Sigmoid colon (tissue), 7 donors: ENCODE measurements at regions of chr9 and their contacts with region 1.

Region 1: GRCh38 chr9:128098297-128099230 is 29.0 kb downstream of the PTGES2 start:
- DNase-seq: peak; percentile 99
- H3K4me3 ChIP-seq: peak overlapping the region; percentile 28 to 55 (median 47)
- H3K27ac ChIP-seq: peak overlapping the region; percentile 91 to 98 (median 92)
- H3K4me1 ChIP-seq: peaks cover 0 to 66% (median 58%) of the 10 kb centered on the region in 4 donors
- H3K27me3 ChIP-seq: no peaks in the 10 kb centered on the region
- CTCF ChIP-seq: no peak
- EP300 ChIP-seq: peak in 3 of 4 donors; percentile 83 to 91 (median 89)
- POLR2A ChIP-seq: peak; percentile 94 to 96

Region 2: DNA sequence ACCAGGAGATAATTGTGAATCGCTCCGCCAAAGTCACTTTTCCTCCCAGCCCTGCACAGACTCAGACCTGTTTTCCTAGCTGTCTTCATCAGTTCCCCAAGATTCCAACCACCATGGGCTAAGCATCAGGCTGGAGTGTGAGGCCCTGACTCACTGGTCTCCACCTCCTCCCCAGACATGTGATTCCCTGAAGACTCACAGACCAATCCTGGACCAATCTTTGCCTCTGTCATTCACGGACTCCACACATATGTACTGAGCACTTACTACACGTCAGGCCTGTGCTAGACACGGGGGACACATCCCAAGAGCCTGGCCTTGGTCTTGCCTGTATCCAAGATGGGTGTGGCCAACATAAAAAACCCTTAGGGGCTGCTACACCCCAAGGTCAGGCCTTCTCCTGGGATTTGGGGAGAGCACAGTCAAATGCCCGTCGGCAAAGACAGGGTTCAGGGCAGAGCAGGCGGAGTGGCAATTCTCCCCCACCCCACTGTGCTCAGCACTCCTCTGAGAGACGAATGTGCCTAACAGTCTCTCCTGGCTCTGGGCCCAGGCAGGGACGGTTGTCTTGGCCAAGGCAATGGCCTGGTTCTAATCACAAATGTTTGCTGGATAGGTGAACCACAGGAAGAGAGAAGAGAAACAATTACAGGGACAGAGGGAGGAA is 129.7 kb before region 1 on chr9:
- intact Hi-C with region 1: loop called (anchors 2 kb)
- DNase-seq: peak; percentile 93
- H3K4me3 ChIP-seq: peak overlapping the region in 1 of 4 donors; percentile 8
- H3K27ac ChIP-seq: peak overlapping the region; percentile 94 to 99 (median 96)
- H3K4me1 ChIP-seq: peaks cover 0 to 100% (median 99%) of the 10 kb centered on the region in 4 donors
- H3K27me3 ChIP-seq: no peaks in the 10 kb centered on the region
- CTCF ChIP-seq: no peak
- EP300 ChIP-seq: peak in 2 of 4 donors; percentile 42 to 61
- POLR2A ChIP-seq: peak in 1 of 2 donors; percentile 31